ENCODE measurements at regions of chr9 and their contacts with region 1.

Region 1: DNA sequence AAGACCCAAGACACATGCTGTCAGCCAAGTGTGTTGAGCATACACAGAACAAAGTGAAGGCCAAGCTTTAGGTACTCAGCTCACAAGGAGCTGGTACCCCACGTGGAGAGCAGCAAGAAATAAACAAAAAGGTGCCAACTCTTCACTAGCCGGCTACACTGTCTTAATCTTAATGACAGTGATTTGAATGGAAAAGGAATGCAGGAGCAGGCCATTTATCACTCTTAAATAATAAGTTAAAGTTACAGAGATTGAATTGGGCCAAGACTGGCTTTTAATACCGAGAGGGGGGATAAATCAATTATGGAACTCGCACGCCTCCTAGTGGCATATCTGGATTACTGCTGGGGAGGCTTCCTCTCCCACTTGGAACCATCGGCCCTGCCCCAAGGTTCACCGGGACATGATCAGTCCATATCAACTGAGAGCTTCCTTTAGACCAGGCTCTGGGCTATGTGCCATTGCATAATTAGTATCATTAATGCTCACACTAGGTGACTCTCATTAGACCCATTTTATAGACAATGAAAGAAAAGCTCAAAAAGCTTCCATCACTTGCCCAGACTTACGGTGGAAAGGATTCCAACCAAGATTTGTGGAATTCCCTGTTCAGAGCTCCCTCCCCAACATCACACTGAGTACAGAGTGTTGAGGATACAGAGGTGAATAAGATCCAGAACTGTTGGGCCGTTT is 94.0 kb downstream of the ACTL7B start:
- DNase-seq: peak; percentile 65
- ATAC-seq: peak; percentile 94
- H3K4me3 Mint-ChIP-seq: no peak overlapping the region
- H3K27ac Mint-ChIP-seq: no peak overlapping the region
- H3K4me1 Mint-ChIP-seq: peaks cover 15% of the 10 kb centered on the region
- H3K27me3 Mint-ChIP-seq: no peaks in the 10 kb centered on the region
- CTCF ChIP-seq: peak; percentile 79

Region 2: DNA sequence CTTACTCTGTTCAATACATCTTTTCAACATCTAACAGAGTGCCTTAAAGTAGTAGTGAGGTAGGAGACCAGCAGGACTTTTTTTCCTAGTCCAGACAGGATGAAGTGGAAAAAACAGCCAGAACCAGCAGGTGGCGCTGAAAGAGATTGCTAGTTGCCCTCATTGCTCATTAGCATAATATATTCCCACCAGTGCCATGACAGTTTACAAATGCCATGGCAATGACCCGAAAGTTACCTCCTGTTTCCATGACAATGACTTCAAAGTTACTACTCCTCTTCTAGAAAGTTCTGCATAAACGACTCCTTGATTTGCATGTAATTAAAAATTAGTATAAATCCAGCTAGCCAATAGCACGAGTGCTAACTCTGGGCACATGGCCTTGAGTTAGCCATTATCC is 293.4 kb before region 1 on chr9:
- CTCF ChIA-PET with region 1: interaction called, 10 read pairs
- POLR2A ChIA-PET with region 1: no interaction called
- DNase-seq: peak; percentile 78
- ATAC-seq: peak; percentile 85
- H3K4me3 Mint-ChIP-seq: no peak overlapping the region
- H3K27ac Mint-ChIP-seq: no peak overlapping the region
- H3K4me1 Mint-ChIP-seq: peaks cover 3% of the 10 kb centered on the region
- H3K27me3 Mint-ChIP-seq: no peaks in the 10 kb centered on the region
- CTCF ChIP-seq: peak; percentile 44

Region 3: GRCh38 chr9:108854641-108855528 is 93.1 kb after region 1 on chr9:
- CTCF ChIA-PET with region 1: no interaction called
- POLR2A ChIA-PET with region 1: no interaction called
- DNase-seq: no peak
- ATAC-seq: no peak
- H3K4me3 Mint-ChIP-seq: no peak overlapping the region
- H3K27ac Mint-ChIP-seq: no peak overlapping the region
- H3K4me1 Mint-ChIP-seq: no peaks in the 10 kb centered on the region
- H3K27me3 Mint-ChIP-seq: no peaks in the 10 kb centered on the region
- CTCF ChIP-seq: no peak

Region 4: DNA sequence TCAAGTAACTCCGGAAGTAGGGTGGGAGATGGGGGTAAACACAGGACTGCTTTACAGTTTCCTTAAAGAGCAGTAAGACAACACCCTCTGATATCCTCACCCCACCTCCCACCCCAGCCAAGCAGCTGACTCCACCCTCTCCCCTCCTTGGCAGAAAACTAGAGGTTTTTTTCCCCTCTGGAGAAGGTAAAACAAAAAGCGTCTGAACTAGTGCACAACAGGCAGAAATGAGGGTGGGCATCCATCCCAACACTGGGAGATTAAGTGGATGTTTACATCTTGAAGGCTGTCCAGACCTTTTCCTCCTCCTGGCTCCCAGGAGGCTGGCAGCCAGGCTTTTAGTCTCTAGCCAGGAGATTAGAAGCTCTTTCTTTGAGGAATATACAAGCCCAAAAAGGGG is 265.4 kb after region 1 on chr9:
- CTCF ChIA-PET with region 1: no interaction called
- POLR2A ChIA-PET with region 1: no interaction called
- DNase-seq: no peak
- ATAC-seq: no peak
- H3K4me3 Mint-ChIP-seq: no peak overlapping the region
- H3K27ac Mint-ChIP-seq: no peak overlapping the region
- H3K4me1 Mint-ChIP-seq: peaks cover 16% of the 10 kb centered on the region
- H3K27me3 Mint-ChIP-seq: no peaks in the 10 kb centered on the region
- CTCF ChIP-seq: no peak